ENCODE measurements at regions of chr17 and their contacts with region 1.

Region 1: DNA sequence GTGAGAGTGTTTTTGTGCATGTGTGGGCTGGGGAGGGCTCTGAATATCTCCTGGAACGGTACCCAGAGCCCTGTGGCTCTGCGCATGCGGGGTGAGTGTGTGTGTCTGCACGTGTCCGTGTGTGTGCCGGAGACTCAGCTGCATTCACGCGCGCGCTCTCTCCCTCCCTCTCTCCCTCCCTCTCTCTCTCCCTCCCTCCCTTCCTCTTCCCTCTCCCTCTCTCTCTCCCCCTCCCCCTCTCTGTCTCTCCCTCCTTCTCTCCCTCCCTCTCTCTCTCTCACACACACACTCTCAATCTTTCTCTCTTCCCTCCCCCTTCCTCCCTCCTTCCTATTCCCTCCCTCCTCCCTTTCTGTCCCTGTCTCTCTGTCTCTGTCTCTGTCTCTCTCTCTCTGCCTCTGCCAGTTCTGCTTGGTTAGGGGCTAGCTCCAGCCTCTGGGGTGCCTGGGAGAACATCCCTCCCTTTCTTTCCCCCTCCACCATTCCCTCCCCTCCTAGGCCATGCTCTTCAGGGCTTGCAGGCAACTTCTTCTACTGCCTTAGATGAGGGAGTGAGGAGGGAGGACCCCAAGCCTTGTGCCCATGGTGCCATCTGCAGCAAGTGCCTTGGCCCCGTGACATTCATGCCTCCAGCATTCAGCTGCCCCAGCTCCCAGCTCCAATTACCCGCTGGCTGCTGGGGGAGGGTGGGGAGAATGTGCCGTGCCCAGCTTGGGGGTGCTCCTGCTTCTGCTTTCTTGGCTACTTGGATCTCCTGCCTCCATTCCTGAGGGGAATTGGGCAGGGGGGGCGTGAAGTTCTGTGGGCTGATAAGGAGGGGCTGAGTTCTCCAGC is 6.4 kb downstream of the THRA start:
- DNase-seq: peak; percentile 96
- ATAC-seq: peak; percentile 66

Region 2: GRCh38 chr17:40100669-40101366 is 31.7 kb after region 1 on chr17:
- intact Hi-C with region 1: loop called (anchors 5 kb)
- DNase-seq: peak; percentile 99
- ATAC-seq: peak; percentile 74